CD4-positive, alpha-beta memory T cell (primary cell): ENCODE measurements at regions of chr4 and their contacts with region 1.

Region 1: GRCh38 chr4:128782076-128782715 is 27.3 kb upstream of the JADE1 start:
- DNase-seq: peak; percentile 47 to 64 (median 61)
- H3K4me3 ChIP-seq: no peak overlapping the region
- H3K4me3 Mint-ChIP-seq: no peak overlapping the region
- H3K27ac ChIP-seq: no peak overlapping the region
- H3K27ac Mint-ChIP-seq: no peak overlapping the region
- H3K4me1 ChIP-seq: no peaks in the 10 kb centered on the region
- H3K4me1 Mint-ChIP-seq: peaks cover 0 to 2% (median 0%) of the 10 kb centered on the region in 4 donors
- H3K27me3 ChIP-seq: no peaks in the 10 kb centered on the region
- H3K27me3 Mint-ChIP-seq: peaks cover 3 to 5% of the 10 kb centered on the region in 2 donors

Region 2: DNA sequence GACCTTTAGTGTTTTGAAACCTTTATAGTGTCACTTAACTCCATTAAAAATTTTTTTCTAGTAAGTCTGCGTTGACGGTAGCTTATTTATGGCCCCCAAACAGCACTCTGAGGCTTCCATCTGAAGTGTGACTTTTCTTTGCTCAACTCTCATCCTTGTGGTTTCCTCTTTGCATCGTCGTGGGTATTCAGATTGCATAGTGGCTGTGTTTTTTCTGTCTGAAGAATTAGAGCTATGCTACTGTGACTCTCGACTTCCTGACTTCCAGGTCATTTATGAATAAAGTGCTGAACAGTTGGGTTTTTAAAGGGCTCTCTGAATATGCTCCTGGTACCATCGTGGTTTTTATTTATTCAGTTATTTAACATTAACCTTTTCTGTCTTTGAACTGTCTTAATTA is 72.2 kb after region 1 on chr4:
- CTCF ChIA-PET with region 1: interaction called, 16 read pairs
- POLR2A ChIA-PET with region 1: no interaction called
- intact Hi-C with region 1: no loop called
- DNase-seq: peak; percentile 26 to 47 (median 35)
- H3K4me3 ChIP-seq: no peak overlapping the region
- H3K4me3 Mint-ChIP-seq: peak overlapping the region in 6 of 8 donors; percentile 19 to 48 (median 46)
- H3K27ac ChIP-seq: no peak overlapping the region
- H3K27ac Mint-ChIP-seq: peak overlapping the region in 6 of 7 donors; percentile 53 to 92 (median 86)
- H3K4me1 ChIP-seq: peaks cover 22% of the 10 kb centered on the region
- H3K4me1 Mint-ChIP-seq: peaks cover 22 to 45% (median 29%) of the 10 kb centered on the region in 4 donors
- H3K27me3 ChIP-seq: no peaks in the 10 kb centered on the region
- H3K27me3 Mint-ChIP-seq: no peaks in the 10 kb centered on the region